ENCODE measurements at regions of chr1 and their contacts with region 1.

Region 1: DNA sequence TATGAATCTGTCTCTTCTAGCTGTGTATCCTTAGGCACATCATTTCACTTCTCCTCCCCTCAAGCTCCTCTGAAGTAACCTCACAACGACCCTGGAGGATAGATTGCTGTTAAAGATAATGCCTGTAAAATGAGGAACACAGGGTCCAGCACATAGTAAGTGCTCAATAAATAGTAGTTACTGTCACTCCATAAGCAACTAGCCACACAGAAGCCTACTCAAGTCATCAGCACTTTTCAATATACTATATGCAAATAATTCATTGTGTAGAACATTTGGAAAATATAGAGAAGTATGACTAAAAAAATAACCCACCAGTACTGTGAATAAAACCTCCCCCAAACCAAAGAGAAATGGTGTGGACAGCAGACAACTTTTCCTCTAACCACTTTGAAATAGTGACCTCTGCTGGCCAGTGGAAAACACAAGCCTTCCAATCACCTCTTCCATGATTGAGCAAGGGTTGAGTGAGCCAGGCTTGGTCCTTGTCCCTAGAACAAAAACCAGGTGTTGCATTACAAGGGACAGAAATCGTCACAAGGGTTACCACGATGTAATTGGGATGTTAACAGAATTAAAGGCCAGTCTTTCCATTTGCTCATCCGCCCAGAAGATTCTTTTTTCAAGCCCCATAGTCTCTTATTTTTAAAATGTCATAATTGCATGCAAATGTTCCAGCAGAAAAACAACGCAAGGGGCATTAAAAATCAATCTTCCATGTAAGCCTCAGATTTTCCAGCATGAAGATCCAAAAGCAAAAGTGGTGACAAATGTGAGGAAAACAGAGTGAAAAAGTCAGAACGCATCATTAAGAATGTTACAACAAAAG is 15.7 kb upstream of the GLIS1 start:
- DNase-seq: peak; percentile 64
- ATAC-seq: peak; percentile 46

Region 2: GRCh38 chr1:53413175-53414001 is 341.3 kb before region 1 on chr1:
- intact Hi-C with region 1: no loop called
- DNase-seq: no peak
- ATAC-seq: no peak

Region 3: GRCh38 chr1:53485478-53486394 is 269.0 kb before region 1 on chr1:
- intact Hi-C with region 1: loop called (anchors 10 kb)
- DNase-seq: peak; percentile 87
- ATAC-seq: peak; percentile 92

Region 4: DNA sequence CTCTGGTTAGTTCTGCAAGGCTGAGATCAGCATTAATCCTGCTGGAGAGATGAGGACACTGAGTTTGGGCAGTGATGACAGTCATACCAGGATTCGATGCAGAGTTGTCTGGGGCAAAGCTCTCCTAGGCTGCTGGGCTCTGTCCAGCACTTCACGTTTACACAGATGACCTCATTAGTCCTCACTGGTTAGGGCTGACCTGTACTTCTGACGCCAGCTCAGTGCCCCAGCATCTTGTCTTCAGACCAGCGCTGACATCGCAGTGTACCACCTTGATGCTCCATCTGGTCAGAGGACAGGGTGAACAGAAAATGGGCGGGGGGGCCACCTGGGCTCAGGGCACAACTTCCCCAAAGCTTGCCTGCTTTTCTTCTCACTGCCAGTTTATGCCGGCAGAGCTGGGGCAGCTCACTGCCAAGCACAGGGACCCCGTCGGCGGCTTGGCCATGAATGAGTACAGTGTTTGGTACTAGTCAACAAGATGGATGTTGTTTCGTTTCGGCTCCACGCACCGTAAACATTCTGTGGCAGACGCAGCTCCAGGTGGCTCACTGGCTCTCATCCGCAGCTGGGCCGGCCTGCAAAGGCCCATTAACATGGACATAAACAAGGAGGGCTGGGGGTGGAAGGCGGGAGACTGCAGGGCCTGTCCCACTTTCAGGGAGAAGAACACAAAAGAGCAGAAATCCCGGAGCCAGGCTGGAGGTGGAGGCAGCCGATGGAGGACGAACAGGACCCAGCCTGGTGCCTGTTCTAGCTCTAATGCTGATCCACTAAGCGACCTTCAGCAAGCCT is 134.4 kb before region 1 on chr1:
- intact Hi-C with region 1: no loop called
- DNase-seq: peak; percentile 54
- ATAC-seq: no peak

Region 5: DNA sequence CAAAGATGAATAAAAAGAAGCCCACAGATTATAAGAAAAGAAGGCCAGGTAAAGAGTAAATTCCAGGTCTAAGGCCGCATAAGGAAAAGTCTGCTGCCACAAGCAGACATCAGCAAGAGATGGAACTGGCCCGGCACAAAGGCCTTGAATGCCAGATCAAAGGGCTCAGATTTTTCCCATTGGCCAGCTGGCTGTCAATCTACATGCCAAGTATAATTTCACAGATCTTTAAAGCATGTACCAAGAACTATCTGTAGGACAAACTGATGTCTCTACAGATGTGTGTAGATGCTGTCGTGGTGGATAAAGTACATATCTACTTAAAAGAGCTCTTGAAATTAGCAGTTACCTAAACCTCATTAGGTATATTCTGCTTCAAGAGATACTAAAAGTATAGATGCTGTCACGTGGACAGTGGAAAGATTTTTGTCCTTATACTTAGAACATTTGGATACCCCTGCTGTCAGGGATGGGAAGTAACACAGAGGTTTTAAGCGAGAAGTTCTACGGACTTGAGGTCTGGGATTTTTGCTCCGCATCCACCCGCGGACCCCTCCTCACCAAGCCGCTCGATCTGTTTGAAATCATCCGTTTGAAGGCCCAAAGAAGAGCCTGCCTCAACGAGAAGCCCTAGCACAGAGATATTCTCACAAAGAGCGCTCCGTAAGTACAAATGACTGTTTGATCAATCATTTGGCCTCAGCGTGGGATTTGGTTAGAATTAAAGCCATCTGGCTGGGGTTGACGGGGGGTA is 25.8 kb before region 1 on chr1:
- intact Hi-C with region 1: no loop called
- DNase-seq: no peak
- ATAC-seq: no peak

Region 6: DNA sequence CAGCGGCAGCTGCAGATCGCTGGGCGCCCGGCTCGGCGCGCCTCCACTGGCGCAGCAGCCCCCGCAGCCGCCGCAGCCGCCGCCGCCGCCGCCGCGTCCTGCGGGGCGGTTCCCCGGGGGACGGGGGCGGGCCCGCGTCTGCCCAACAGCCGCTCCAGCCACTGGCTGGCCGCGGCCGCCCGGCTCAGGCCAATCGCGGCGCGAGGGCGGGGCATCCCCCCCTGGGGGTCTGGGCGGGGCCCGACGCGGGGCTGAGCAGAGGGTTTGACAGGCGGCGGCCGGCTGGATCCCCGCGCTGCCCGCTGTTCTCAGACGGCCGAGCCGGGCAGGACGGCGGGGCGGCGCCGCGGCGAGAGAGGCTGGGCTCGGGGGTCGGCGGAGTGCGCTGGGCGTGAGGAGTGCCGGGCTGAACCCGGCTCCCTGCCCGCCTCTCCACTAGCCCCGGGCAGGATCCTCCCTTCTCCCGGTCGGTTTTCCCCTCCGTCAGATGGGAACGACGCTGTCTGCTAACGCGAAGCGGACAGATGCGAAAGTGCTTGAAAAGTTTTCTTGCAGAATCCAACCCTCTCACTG is 15.5 kb before region 1 on chr1 and contains the start of gene GLIS1:
- intact Hi-C with region 1: no loop called
- DNase-seq: peak; percentile 87
- ATAC-seq: peak; percentile 96
- total RNA-seq, gene GLIS1: 0.98 TPM